ENCODE measurements at regions of chr5 and their contacts with region 1.

Region 1: DNA sequence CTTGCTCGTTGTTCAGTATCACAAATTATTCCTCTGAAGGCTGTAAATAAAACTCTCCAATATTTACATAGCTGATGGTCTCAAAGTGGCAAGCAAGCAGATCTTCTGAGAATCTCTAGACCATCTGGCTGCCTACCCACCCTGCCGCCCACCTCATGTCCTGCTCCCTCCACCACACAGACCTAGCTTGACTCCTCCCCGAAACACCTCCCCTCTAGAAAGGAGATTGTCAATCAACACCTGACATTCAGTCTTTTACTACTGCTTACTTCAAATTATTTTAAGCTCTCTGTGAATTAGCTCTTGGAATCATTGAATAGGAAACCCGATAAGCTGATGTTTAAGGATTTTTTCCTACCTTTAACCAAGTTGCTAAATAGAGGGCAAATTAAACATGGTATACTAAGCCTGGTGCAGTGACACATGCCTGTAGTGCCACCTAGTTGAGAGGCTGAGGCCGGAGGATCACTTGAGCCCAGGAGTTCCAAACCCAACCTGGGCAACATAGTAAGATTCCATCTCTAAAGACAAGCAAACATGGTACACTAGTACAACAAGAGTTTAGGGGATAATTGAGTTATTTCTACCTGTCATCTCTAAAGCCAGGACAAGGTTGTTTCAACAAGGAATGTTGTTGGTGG is 10.9 kb upstream of the SOWAHA start:
- DNase-seq: no peak
- H3K4me3 Mint-ChIP-seq: no peak overlapping the region
- H3K27ac Mint-ChIP-seq: no peak overlapping the region
- H3K4me1 Mint-ChIP-seq: no peaks in the 10 kb centered on the region
- H3K27me3 Mint-ChIP-seq: peaks cover 75% of the 10 kb centered on the region

Region 2: DNA sequence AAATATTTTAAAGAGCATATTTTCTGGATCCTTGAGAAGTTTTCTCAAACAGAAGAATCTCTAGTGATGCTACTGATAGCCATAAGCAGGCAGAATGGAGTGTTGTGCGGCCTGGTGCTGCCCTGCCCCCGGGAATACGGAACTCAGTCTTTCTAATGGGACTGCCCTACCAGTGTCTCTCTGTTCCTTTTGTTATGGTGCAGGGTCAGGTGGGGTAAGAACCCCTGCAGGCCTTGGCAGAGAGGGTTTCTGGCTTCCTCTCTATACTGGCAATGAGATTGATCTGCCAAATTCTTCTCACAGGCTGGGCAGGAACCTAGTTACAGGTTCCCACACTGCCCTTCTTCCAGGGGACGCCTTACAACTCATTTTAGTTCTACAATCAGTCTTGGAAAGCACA is 261.4 kb before region 1 on chr5:
- CTCF ChIA-PET with region 1: no interaction called
- DNase-seq: no peak
- H3K4me3 Mint-ChIP-seq: no peak overlapping the region
- H3K27ac Mint-ChIP-seq: no peak overlapping the region
- H3K4me1 Mint-ChIP-seq: peaks cover 5% of the 10 kb centered on the region
- H3K27me3 Mint-ChIP-seq: peaks cover 30% of the 10 kb centered on the region

Region 3: DNA sequence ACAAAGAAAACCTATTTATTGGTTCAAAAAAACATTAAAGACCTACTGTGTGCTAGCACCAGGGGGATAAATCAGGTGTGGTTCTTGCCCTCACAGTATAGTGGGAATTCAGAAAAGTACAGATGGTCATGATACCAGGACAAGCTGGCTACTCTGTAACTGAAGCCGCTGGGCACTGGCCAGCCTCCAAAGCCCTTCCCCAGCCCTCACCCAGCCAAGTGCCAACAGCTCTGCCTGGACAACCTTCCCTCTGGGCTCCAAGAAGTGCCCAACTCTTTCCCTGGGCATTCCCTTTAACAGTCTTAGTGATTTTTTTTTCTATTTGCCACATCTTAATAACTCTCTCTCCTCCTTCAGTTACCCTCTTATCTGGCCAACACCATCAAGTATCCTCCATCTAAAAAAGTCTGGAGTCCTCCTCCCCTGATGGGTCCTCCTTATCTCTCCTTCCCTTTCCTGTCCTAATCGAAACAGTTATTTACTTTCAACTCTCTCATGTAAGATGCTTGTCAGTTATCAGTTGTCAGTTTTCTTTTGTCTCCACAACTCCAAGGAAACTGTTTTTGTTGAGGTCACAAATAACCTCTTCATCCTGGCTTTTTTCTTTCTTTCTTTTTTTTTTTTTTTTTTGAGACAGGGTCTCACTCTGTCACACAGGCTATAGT is 11.8 kb before region 1 on chr5:
- CTCF ChIA-PET with region 1: interaction called, 10 read pairs
- DNase-seq: no peak
- H3K4me3 Mint-ChIP-seq: no peak overlapping the region
- H3K27ac Mint-ChIP-seq: no peak overlapping the region
- H3K4me1 Mint-ChIP-seq: no peaks in the 10 kb centered on the region
- H3K27me3 Mint-ChIP-seq: peaks cover 68% of the 10 kb centered on the region

Measured in activated naive CD4-positive, alpha-beta T cell treated with anti-CD3 and anti-CD28 coated beads, Interleukin-2, amount 10 ng/mL, durations not matched to agents 7 days and 5 days (primary cell).